ENCODE measurements at regions of chr18 and their contacts with region 1.

Region 1: DNA sequence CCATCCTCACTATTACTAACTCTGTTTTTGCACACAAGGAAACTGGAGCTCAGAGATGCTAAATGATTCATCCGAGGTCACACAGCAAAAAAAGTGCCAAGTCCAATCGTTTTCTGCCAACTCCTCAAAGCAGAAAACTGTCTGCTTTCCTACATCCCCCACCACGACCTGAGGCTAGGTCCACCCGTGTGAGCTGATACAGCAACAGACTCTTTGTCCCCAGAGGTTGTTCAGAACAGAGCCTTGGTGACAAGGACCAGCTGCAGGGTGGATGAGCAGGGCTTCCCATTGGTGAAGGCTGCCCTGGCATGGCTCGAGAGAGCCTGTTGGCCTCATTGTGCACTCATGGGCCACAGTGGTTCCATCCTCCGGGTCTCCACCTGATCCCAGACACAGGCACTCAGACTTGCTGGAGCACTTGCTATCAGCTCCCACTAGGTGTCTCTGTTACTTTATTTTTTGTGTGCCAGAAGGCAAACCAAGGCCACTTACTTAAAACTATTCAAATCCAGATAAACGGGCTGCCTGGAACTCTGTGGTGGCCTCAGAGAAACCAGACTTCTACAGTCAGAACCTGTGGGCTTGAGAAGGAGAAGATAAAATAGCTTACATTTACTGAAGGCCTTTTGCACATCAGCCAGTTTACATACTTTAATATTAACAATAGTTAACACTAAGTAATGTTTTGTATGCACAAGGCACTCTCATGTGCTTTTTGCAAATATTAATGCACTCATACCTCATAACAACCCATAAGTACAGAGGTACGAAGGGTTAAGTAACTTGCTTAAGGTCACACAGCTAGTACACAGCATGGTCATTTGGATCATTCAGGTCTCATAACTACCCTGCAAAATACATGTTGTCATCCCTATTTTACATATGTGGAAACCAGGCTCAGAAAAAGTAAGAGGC is 62.9 kb upstream of the CTIF start:
- DNase-seq: no peak
- H3K4me3 ChIP-seq: no peak overlapping the region
- H3K27ac ChIP-seq: no peak overlapping the region
- H3K4me1 ChIP-seq: peaks cover 0 to 4% (median 0%) of the 10 kb centered on the region in 3 donors
- H3K27me3 ChIP-seq: peaks cover 0 to 4% (median 0%) of the 10 kb centered on the region in 4 donors
- CTCF ChIP-seq: peak; percentile 42 to 86 (median 79)
- POLR2A ChIP-seq: no peak

Region 2: GRCh38 chr18:48580782-48581181 is 104.9 kb after region 1 on chr18:
- intact Hi-C with region 1: no loop called
- DNase-seq: no peak
- H3K4me3 ChIP-seq: no peak overlapping the region
- H3K27ac ChIP-seq: no peak overlapping the region
- H3K4me1 ChIP-seq: peaks cover 0 to 18% (median 0%) of the 10 kb centered on the region in 3 donors
- H3K27me3 ChIP-seq: no peaks in the 10 kb centered on the region
- CTCF ChIP-seq: no peak
- POLR2A ChIP-seq: no peak

Region 3: DNA sequence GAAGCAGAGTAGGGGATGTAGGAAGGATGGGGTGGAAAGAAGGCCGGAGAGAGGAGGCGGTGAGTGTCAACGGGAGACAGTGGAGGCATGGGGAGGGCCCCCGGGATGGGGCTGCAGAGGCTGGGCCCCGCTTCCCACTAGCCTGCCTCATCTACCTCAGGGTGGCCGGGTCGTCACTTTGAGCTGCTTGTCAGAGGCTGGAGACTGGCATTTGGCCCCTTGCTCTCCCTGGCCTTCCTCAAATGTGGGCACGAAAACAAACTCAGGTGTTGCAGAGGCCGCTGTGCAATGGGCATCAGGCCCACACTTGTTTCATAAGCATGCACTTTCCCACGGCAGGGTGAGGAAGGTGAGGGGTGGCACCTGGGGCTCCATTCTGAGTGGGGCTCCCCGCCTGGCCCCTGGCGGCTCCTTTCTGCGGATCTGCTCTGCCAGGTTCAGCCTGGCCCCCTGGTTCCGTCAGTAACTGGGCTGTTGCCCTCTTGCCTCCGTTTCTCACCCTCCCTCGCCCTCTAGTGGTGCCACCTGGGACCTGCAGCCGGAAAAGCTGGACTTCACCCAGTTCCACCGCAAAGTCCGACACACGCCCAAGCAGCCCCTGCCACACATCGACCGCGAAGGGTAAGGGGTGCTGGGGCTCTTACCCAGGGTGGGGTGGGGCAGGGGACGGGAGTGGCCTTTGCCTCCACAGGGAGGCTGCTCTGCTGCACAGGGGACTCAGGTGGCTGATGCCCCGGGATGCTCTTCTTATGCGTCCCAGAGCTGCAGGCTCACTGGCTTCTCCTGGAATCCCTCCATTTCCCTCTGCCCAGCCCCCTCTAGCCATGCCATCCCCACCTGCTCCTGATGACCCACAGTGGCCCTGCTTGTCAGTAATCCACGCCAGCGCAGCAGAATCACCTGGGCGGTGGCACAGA is 188.3 kb after region 1 on chr18:
- intact Hi-C with region 1: loop called (anchors 2 kb)
- DNase-seq: no peak
- H3K4me3 ChIP-seq: no peak overlapping the region
- H3K27ac ChIP-seq: no peak overlapping the region
- H3K4me1 ChIP-seq: peaks cover 0 to 25% (median 0%) of the 10 kb centered on the region in 3 donors
- H3K27me3 ChIP-seq: no peaks in the 10 kb centered on the region
- CTCF ChIP-seq: peak; percentile 63 to 87 (median 83)
- POLR2A ChIP-seq: no peak